ENCODE measurements at regions of chr11 and their contacts with region 1.

Region 1: DNA sequence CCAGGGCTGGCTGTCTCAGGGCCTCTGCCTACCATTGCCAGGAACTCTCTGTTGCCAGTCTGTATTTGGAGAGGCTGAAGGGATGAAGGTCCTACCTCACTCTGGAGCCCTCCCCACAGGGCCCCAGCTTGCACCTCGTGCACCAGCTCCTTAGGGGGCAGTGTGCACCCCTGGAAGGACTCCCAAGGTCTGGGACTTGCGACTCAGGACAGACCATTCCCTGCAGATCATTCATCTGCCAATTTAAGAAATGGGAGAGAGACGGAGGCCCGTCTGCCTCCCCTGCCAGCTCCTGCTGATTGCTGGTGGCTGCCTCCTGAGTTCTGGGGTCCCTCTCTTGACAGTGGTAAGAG is 27.5 kb upstream of the MALAT1 start:
- DNase-seq: peak; percentile 85
- ATAC-seq: peak; percentile 89

Region 2: GRCh38 chr11:65382033-65382807 is 89.2 kb before region 1 on chr11 and contains the start of gene SLC25A45:
- intact Hi-C with region 1: loop called (anchors 5 kb)
- DNase-seq: peak; percentile 95
- ATAC-seq: peak; percentile 94
- total RNA-seq, gene SLC25A45: 5.6 TPM

Region 3: GRCh38 chr11:65454696-65455456 is 16.5 kb before region 1 on chr11:
- intact Hi-C with region 1: loop called (anchors 2 kb)
- DNase-seq: peak; percentile 96
- ATAC-seq: peak; percentile 97

Region 4: DNA sequence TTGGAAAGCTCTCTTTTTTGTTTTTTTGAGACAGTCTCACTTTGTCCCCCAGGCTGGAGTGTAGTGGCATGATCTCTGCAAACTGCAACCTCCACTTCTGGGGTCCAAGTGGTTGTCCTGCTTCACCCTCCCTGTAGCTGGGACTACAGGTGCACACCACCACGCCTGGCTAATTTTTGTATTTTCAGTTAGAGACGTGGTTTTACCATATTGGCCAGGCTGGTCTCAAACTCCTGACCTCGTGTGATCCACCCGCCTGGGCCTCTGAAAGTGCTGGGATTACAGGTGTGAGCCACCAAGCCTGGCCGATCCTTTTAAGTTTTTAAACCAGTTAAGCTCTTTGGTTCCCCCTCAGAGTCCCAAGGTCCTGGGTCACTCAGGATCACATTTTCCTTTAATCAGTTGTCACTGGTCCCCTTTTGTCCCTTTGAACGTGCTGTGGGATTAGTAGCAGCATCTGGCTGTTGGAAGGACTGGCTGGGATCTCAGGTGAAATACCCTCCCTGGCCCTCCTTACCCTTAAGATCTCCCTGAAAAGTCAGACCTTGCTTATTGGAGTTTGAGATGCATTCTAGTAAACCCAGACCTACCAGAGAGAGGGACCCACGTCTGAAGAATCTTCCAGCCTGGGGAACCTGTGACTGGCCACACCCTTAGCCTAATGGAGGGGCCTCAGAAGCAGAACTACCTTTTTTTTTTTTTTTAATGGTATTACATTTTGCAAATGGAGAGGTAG is 35.6 kb after region 1 on chr11:
- intact Hi-C with region 1: loop called (anchors 5 kb)
- DNase-seq: no peak
- ATAC-seq: peak; percentile 8

Measured in Right ventricle myocardium inferior (tissue), 1 donor.